Activated naive CD4-positive, alpha-beta T cell treated with anti-CD3 and anti-CD28 coated beads, Interleukin-2, amount 10 ng/mL, durations not matched to agents 7 days and 5 days (primary cell): ENCODE measurements at regions of chr2 and their contacts with region 1.

Region 1: DNA sequence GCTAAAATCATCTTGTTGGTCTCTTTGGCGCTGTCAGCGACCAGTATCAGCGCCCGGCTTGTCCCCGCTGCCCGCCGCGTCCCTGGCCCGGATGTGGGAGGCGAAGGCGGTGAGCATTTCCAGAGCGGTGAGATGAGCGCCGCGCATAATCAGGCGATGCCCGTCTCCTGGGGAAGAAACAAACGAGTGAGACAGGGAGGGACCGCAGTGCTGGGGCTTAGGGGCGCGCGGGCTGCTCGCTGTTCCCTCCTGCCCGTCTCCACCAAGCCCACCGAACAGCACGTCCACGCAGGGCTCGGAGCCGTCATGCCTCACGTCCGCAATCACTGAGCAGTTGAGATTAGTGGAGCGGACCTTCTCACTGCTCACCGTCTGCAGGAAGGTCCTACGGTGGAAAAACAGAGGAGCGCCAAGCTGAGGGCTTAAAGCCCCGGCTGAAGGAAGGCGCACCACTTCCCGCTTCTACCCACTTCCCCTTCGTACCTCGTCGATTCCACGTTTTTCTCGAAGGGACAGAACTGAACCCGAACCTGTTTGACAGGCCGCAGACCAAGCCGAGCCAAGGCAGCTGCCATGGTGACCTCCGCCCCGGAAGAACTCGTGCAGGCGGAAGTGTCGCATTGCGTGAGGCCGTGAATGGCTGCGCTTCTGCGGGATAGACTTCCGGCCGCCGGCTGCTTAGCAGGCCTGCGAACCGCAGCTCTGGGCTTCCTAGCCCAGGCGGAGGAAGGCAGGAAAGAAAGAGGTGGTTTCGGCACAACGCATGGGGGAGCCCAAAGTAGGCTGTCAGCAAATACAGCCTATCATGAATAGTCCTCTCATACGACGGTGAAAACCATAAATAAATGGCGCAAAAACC is at the start of gene MRPL53:
- DNase-seq: peak; percentile 97
- H3K4me3 Mint-ChIP-seq: peak within 1 kb of the TSS; percentile 96
- H3K27ac Mint-ChIP-seq: peak within 1 kb of the TSS; percentile 99
- H3K4me1 Mint-ChIP-seq: peaks cover 40% of the 10 kb centered on the region
- H3K27me3 Mint-ChIP-seq: peaks cover 7% of the 10 kb centered on the region

Region 2: GRCh38 chr2:74458132-74458925 is 14.0 kb before region 1 on chr2 and contains the start of gene WBP1:
- CTCF ChIA-PET with region 1: interaction called, 11 read pairs
- DNase-seq: peak; percentile 100
- H3K4me3 Mint-ChIP-seq: peak within 1 kb of the TSS; percentile 92
- H3K27ac Mint-ChIP-seq: peak within 1 kb of the TSS; percentile 98
- H3K4me1 Mint-ChIP-seq: peaks cover 64% of the 10 kb centered on the region
- H3K27me3 Mint-ChIP-seq: no peaks in the 10 kb centered on the region